ENCODE measurements at regions of chr7 and their contacts with region 1.

Region 1: GRCh38 chr7:135300913-135301765 is 67.5 kb downstream of the STRA8 start:
- DNase-seq: no peak
- H3K4me3 ChIP-seq: no peak overlapping the region
- H3K27ac ChIP-seq: no peak overlapping the region
- H3K27me3 ChIP-seq: peaks cover 2% of the 10 kb centered on the region
- CTCF ChIP-seq: no peak

Region 2: DNA sequence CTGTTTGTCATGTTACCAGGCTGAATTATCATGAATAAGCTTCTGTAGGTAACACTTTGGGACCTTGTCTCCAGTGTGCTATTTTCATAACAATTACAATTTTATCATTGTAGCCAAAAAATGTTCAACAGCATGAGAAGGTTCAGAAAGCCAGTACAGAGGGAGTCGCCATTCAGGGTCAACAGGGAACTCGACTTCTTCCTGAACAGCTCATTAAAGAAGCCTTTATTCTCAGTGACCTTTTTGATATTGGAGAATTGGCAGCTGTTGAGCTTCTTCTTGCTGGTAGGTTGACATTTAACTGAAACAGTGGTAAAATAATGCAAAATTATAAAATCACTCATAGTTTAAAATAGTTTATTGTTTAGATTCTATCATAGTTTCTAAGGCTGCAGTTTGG is 272.4 kb after region 1 on chr7:
- CTCF ChIA-PET with region 1: interaction called, 10 read pairs
- POLR2A ChIA-PET with region 1: no interaction called
- DNase-seq: no peak
- H3K4me3 ChIP-seq: no peak overlapping the region
- H3K27ac ChIP-seq: no peak overlapping the region
- H3K27me3 ChIP-seq: no peaks in the 10 kb centered on the region
- CTCF ChIP-seq: no peak

Measured in AG04450 (cell line).